Panc1 (cell line): ENCODE measurements at regions of chr7 and their contacts with region 1.

Region 1: GRCh38 chr7:39732837-39733804 is 109.7 kb downstream of the RALA start:
- DNase-seq: peak; percentile 79
- ATAC-seq: peak; percentile 98
- H3K4me3 ChIP-seq: peak overlapping the region; percentile 65 to 68
- H3K27ac ChIP-seq: peak overlapping the region; percentile 90
- H3K4me1 ChIP-seq: peaks cover 24% of the 10 kb centered on the region
- H3K27me3 ChIP-seq: no peaks in the 10 kb centered on the region
- CTCF ChIP-seq: no peak

Region 2: GRCh38 chr7:39709768-39710311 is 23.3 kb before region 1 on chr7:
- CTCF ChIA-PET with region 1: no interaction called
- POLR2A ChIA-PET with region 1: interaction called, 11 read pairs
- in situ Hi-C with region 1: no loop called
- intact Hi-C with region 1: no loop called
- DNase-seq: no peak
- ATAC-seq: no peak; the same call in 1 of the 2 replicates
- H3K4me3 ChIP-seq: no peak overlapping the region
- H3K27ac ChIP-seq: no peak overlapping the region
- H3K4me1 ChIP-seq: no peaks in the 10 kb centered on the region
- H3K27me3 ChIP-seq: no peaks in the 10 kb centered on the region
- CTCF ChIP-seq: no peak